ENCODE measurements at regions of chrX and their contacts with region 1.

Region 1: GRCh38 chrX:140733769-140734342 is 24.3 kb downstream of the LINC00632 start:
- DNase-seq: no peak
- ATAC-seq: peak in 2 of 8 donors; percentile 47 to 73
- H3K4me3 ChIP-seq: no peak overlapping the region
- H3K27ac ChIP-seq: no peak overlapping the region
- H3K4me1 ChIP-seq: no peaks in the 10 kb centered on the region
- H3K27me3 ChIP-seq: peaks cover 0 to 10% (median 0%) of the 10 kb centered on the region in 7 donors
- CTCF ChIP-seq: peak; percentile 41 to 83 (median 65)

Region 2: GRCh38 chrX:140701480-140701879 is 32.4 kb before region 1 on chrX:
- intact Hi-C with region 1: loop called in 3 of 10 experiments (anchors 2 to 5 kb)
- DNase-seq: no peak
- ATAC-seq: no peak
- H3K4me3 ChIP-seq: no peak overlapping the region
- H3K27ac ChIP-seq: no peak overlapping the region
- H3K4me1 ChIP-seq: no peaks in the 10 kb centered on the region
- H3K27me3 ChIP-seq: no peaks in the 10 kb centered on the region
- CTCF ChIP-seq: peak in 7 of 9 donors; percentile 26 to 58 (median 43)

Measured in heart right ventricle (tissue), 16 donors.